ENCODE measurements at regions of chr10 and their contacts with region 1.

Region 1: DNA sequence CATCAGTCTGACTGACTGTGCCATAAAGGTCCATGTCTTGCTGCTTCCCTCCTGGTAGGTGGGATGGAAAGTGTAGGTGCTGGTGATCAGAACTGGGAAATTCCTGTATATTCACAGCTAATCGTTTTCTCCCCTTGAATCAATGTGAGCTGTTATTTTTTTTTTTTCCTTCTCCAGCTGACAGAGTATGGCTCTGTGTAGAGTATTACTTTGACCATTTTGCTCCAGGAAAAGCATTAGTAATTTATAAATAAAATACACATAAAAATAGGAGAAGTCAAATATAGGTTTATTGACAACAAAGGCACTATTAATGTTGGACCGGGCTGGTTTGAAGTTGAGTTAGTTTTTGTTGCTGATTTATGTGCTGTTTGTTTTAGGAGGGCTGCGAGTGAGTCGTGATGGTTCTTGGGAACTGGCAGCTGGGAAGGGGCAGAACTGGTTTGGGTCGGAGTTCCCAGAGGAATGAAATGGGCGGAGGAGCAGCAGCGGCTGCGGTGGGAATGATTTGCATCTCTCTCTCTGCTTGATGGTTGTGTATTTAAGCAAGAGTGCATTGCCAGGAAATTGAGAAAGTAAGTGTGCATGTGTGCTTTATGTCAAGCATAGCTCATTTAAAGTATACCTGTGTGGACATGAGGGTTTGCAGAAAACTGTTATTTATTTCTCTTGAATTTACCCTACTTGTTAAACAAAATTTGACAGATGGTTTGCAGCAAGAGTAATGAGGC is 80.9 kb downstream of the LRMDA start:
- DNase-seq: no peak

Region 2: GRCh38 chr10:75623310-75624093 is 111.1 kb after region 1 on chr10:
- intact Hi-C with region 1: loop called in 1 of 2 experiments (anchors 10 kb)
- DNase-seq: no peak

Region 3: GRCh38 chr10:77212632-77213031 is 1700.3 kb after region 1 on chr10:
- intact Hi-C with region 1: loop called in 1 of 2 experiments (anchors 5 kb)
- DNase-seq: no peak

Measured in posterior vena cava (tissue), 2 donors.